ENCODE measurements at regions of chr20 and their contacts with region 1.

Region 1: GRCh38 chr20:39049684-39050554 is 87.8 kb downstream of the DHX35 start:
- DNase-seq: peak; percentile 84
- H3K4me3 ChIP-seq: peak overlapping the region; percentile 46 to 74 (median 68)
- H3K27ac ChIP-seq: peak overlapping the region; percentile 70 to 82 (median 77)
- H3K4me1 ChIP-seq: peaks cover 0 to 29% (median 13%) of the 10 kb centered on the region in 4 donors
- H3K27me3 ChIP-seq: no peaks in the 10 kb centered on the region
- CTCF ChIP-seq: peak; percentile 92 to 98 (median 98)
- EP300 ChIP-seq: no peak
- POLR2A ChIP-seq: no peak

Region 2: GRCh38 chr20:38751360-38751976 is 298.5 kb before region 1 on chr20:
- intact Hi-C with region 1: loop called (anchors 10 kb)
- DNase-seq: no peak
- H3K4me3 ChIP-seq: no peak overlapping the region
- H3K27ac ChIP-seq: no peak overlapping the region
- H3K4me1 ChIP-seq: peaks cover 0 to 21% (median 16%) of the 10 kb centered on the region in 4 donors
- H3K27me3 ChIP-seq: no peaks in the 10 kb centered on the region
- CTCF ChIP-seq: peak in 3 of 4 experiments; percentile 27 to 47 (median 34)
- EP300 ChIP-seq: no peak
- POLR2A ChIP-seq: no peak

Region 3: GRCh38 chr20:38926142-38926933 is 123.6 kb before region 1 on chr20 and contains the start of gene FAM83D:
- intact Hi-C with region 1: loop called (anchors 1 kb)
- DNase-seq: peak; percentile 98
- H3K4me3 ChIP-seq: peak within 1 kb of the TSS; percentile 48 to 79 (median 60)
- H3K27ac ChIP-seq: peak within 1 kb of the TSS; percentile 75 to 87 (median 84)
- H3K4me1 ChIP-seq: peaks cover 0 to 38% (median 13%) of the 10 kb centered on the region in 4 donors
- H3K27me3 ChIP-seq: no peaks in the 10 kb centered on the region
- CTCF ChIP-seq: no peak
- EP300 ChIP-seq: no peak
- POLR2A ChIP-seq: peak; percentile 85 to 95
- total RNA-seq, gene FAM83D: 14.3 to 291 (median 57.8) TPM

Region 4: DNA sequence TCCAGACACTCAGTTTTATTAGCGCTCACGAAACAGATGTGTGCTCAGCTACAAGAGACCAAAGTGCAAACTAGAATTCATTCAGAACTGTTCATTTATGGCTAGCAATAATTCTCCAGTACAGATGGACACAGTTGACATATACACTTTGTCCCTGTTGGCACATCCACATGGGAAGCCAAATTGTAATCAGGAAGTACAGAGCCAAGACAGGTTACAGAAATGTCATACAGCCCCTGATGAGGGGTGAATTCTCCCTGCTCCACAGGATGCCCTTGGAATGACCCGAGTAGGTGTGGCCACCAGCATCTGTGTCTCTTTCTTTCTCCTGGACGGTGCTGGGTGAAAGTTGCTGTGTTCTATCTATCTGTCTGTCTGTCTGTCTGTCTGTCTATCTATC is 80.2 kb before region 1 on chr20:
- intact Hi-C with region 1: loop called (anchors 5 kb)
- DNase-seq: no peak
- H3K4me3 ChIP-seq: no peak overlapping the region
- H3K27ac ChIP-seq: peak overlapping the region; percentile 75 to 98 (median 92)
- H3K4me1 ChIP-seq: peaks cover 0 to 75% (median 42%) of the 10 kb centered on the region in 4 donors
- H3K27me3 ChIP-seq: no peaks in the 10 kb centered on the region
- CTCF ChIP-seq: no peak
- EP300 ChIP-seq: no peak
- POLR2A ChIP-seq: no peak

Region 5: GRCh38 chr20:38985603-38986170 is 64.2 kb before region 1 on chr20:
- intact Hi-C with region 1: loop called (anchors 5 kb)
- DNase-seq: no peak
- H3K4me3 ChIP-seq: peak overlapping the region in 1 of 4 donors; percentile 1
- H3K27ac ChIP-seq: peak overlapping the region; percentile 57 to 98 (median 82)
- H3K4me1 ChIP-seq: peaks cover 0 to 68% (median 38%) of the 10 kb centered on the region in 4 donors
- H3K27me3 ChIP-seq: no peaks in the 10 kb centered on the region
- CTCF ChIP-seq: no peak
- EP300 ChIP-seq: peak in 3 of 4 donors; percentile 10 to 71 (median 63)
- POLR2A ChIP-seq: no peak

Region 6: DNA sequence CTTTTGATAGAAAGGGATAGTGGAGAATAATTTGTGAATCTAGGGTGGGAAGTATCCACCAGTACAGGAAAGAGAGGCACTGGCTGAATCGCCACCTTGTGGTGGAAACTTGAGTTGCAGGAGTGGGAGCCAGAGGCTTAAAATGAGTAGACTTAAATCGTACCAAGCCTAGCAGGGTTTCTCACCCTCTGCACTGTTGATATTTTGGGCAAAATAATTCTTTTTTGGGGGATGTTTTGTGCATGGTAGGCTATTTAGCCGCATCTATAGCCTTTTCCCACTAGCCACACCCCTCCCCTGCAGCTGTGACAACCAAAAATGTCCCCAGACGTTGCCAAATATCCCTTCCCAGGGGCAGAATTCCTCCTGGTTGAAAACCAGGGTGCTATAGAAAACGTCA is 31.3 kb after region 1 on chr20:
- intact Hi-C with region 1: loop called (anchors 1 kb)
- DNase-seq: peak; percentile 86
- H3K4me3 ChIP-seq: no peak overlapping the region
- H3K27ac ChIP-seq: no peak overlapping the region
- H3K4me1 ChIP-seq: no peaks in the 10 kb centered on the region
- H3K27me3 ChIP-seq: peaks cover 0 to 7% (median 0%) of the 10 kb centered on the region in 3 donors
- CTCF ChIP-seq: peak; percentile 61 to 93 (median 81)
- EP300 ChIP-seq: no peak
- POLR2A ChIP-seq: no peak